ENCODE measurements at regions of chr3 and their contacts with region 1.

Region 1: GRCh38 chr3:73614411-73614810 is 10.3 kb downstream of the PDZRN3 start:
- DNase-seq: peak in 1 of 2 donors; percentile 54
- ATAC-seq: peak; percentile 57 to 90 (median 78)
- H3K4me3 ChIP-seq: no peak overlapping the region
- H3K27ac ChIP-seq: peak overlapping the region in 6 of 10 donors; percentile 9 to 83 (median 62)
- H3K4me1 ChIP-seq: peaks cover 0 to 92% (median 45%) of the 10 kb centered on the region in 9 donors
- H3K27me3 ChIP-seq: no peaks in the 10 kb centered on the region
- CTCF ChIP-seq: peak in 2 of 9 donors; percentile 15 to 16

Region 2: DNA sequence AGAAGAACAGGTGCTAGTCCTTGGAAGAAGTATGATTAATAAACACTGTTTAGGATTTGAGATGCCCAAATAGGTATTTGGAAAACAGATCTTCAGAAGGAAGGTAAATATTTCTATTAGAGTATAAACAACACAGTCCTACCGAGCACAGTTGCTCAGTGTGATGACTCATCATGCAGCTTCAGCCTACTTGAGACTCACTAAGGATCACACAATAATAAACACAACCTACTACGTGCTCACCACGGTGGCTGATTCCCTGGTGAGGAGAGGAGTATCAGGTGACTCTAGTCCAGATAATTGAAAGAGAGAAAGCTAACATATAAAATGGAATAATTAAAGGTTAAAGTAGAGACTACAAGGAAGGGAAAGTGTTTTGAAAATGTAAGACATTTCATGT is 61.7 kb before region 1 on chr3:
- intact Hi-C with region 1: no loop called
- DNase-seq: no peak
- ATAC-seq: peak in 1 of 8 donors; percentile 47
- H3K4me3 ChIP-seq: no peak overlapping the region
- H3K27ac ChIP-seq: peak overlapping the region in 1 of 10 donors; percentile 23
- H3K4me1 ChIP-seq: peaks cover 3 to 64% (median 46%) of the 10 kb centered on the region in 9 donors
- H3K27me3 ChIP-seq: no peaks in the 10 kb centered on the region
- CTCF ChIP-seq: no peak

Region 3: DNA sequence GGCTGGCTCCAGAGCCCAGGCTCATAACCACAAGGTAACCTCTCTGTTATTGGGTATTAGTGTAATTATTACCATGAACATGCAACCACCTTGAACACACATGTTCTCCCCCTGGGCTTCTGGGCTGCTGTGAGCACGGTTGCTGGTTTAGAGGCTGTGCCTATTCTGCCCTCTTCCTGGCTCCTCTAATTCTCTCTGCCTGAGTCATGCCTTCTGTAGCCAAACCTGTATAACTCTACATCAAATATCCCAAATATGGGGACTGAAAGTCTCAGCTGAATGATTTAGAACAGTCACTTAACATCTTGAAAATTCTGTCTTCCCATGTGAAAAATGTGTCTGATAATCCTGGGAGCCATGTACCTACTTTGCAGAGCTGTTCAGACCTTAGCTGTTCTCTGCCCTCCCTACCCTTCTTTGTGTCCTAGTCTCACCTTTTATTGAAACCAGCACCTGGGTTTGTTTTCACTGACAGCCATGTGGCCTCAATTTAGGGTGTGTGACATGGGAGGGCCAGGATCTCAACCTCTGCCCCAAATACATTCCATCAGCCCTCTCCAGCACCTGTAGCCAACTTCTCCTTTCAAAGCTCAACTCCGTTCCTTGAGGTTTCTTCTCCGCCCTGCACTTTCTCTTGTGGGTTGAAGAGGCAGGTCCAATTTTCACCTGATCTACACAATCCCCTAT is 50.4 kb before region 1 on chr3:
- intact Hi-C with region 1: loop called in 2 of 10 experiments (anchors 1 to 5 kb)
- DNase-seq: no peak
- ATAC-seq: peak in 1 of 8 donors; percentile 31
- H3K4me3 ChIP-seq: no peak overlapping the region
- H3K27ac ChIP-seq: peak overlapping the region in 1 of 10 donors; percentile 9
- H3K4me1 ChIP-seq: peaks cover 2 to 68% (median 17%) of the 10 kb centered on the region in 9 donors
- H3K27me3 ChIP-seq: no peaks in the 10 kb centered on the region
- CTCF ChIP-seq: no peak